ENCODE measurements at regions of chr5 and their contacts with region 1.

Region 1: GRCh38 chr5:138178516-138179276 is at the starts of genes BRD8 and KIF20A:
- DNase-seq: peak; percentile 92
- ATAC-seq: peak; percentile 92
- H3K4me3 ChIP-seq: peak within 1 kb of the TSS; percentile 97
- H3K27ac ChIP-seq: peak within 1 kb of the TSS; percentile 97
- H3K4me1 ChIP-seq: no peaks in the 10 kb centered on the region; the same call in 1 of the 2 replicates
- H3K27me3 ChIP-seq: no peaks in the 10 kb centered on the region
- CTCF ChIP-seq: no peak
- EP300 ChIP-seq: peak in 1 of 2 experiments; percentile 13; a peak in 2 of 4 replicates
- POLR2A ChIP-seq: peak; percentile 73
- RAD21 ChIP-seq: no peak
- polyA plus RNA-seq, gene BRD8: 35.2 to 52.6 TPM
- polyA plus RNA-seq, gene KIF20A: 20.7 to 27.2 TPM

Region 2: GRCh38 chr5:137858223-137858916 is 320.3 kb before region 1 on chr5:
- CTCF ChIA-PET with region 1: no interaction called
- POLR2A ChIA-PET with region 1: no interaction called
- RAD21 ChIA-PET with region 1: no interaction called
- SMC1A ChIA-PET with region 1: no interaction called
- in situ Hi-C with region 1: no loop called
- intact Hi-C with region 1: no loop called
- DNase-seq: peak; percentile 58
- ATAC-seq: peak; percentile 91
- H3K4me3 ChIP-seq: no peak overlapping the region
- H3K27ac ChIP-seq: peak overlapping the region; percentile 11
- H3K4me1 ChIP-seq: peaks cover 29% of the 10 kb centered on the region
- H3K27me3 ChIP-seq: no peaks in the 10 kb centered on the region
- CTCF ChIP-seq: no peak
- EP300 ChIP-seq: no peak
- POLR2A ChIP-seq: no peak
- RAD21 ChIP-seq: no peak

Region 3: DNA sequence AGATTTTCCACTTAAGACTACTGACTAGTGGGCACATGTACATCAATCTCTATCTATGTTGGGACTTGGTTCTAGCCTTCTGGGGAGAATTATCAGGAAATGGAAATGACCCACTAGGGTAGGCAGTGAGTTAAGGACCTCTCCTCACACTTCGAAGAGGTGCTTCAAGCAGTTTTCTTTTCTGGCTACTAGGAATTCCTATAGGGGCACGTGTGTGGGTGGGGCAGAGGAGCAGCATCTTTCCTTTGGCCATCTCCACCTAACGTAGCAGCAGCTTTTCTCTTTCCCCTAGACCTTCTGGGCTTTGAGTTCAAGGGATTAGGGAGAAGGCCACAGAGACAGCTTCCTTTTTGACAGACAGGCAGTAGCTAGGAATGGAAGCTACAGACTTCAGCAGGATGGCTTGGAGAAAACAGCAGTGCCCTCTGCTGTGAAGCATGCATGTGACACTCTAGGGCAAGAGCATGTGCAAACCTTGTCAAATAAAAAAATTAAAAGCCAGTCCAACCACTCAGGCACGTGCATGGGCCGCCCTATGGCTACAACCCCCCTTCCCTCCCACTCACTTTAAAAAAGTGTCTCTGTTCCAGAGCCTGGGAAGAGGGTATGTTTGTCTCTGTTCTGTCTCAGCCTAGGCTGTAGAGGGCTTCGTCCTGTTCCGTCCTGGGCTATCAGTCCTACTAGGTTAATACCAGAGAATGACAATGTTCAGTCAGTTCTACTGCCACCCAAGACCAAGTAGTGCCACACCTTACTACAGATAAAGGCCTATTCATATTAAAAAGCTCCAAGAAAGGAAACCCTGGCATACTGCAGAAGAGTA is 104.4 kb after region 1 on chr5:
- CTCF ChIA-PET with region 1: interaction called, 9 read pairs
- POLR2A ChIA-PET with region 1: no interaction called
- RAD21 ChIA-PET with region 1: interaction called, 5 read pairs
- SMC1A ChIA-PET with region 1: interaction called, 3 read pairs
- in situ Hi-C with region 1: no loop called
- intact Hi-C with region 1: loop called (anchors 1 kb)
- DNase-seq: no peak
- ATAC-seq: peak; percentile 78
- H3K4me3 ChIP-seq: no peak overlapping the region
- H3K27ac ChIP-seq: no peak overlapping the region
- H3K4me1 ChIP-seq: no peaks in the 10 kb centered on the region
- H3K27me3 ChIP-seq: no peaks in the 10 kb centered on the region
- CTCF ChIP-seq: peak; percentile 44 to 50 (median 44); a peak in 5 of 6 replicates
- EP300 ChIP-seq: no peak
- POLR2A ChIP-seq: no peak
- RAD21 ChIP-seq: peak; percentile 63

Region 4: GRCh38 chr5:138352071-138352721 is 173.5 kb after region 1 on chr5 and contains the start of gene KDM3B:
- CTCF ChIA-PET with region 1: interaction called, 46 read pairs
- POLR2A ChIA-PET with region 1: interaction called, 5 read pairs
- RAD21 ChIA-PET with region 1: interaction called, 16 read pairs
- SMC1A ChIA-PET with region 1: interaction called, 17 read pairs
- in situ Hi-C with region 1: no loop called
- intact Hi-C with region 1: loop called (anchors 2 kb)
- DNase-seq: peak; percentile 55
- ATAC-seq: peak; percentile 77
- H3K4me3 ChIP-seq: peak within 1 kb of the TSS; percentile 99
- H3K27ac ChIP-seq: peak within 1 kb of the TSS; percentile 93
- H3K4me1 ChIP-seq: peaks cover 3% of the 10 kb centered on the region
- H3K27me3 ChIP-seq: no peaks in the 10 kb centered on the region
- CTCF ChIP-seq: peak; percentile 99 to 100 (median 99)
- EP300 ChIP-seq: no peak
- POLR2A ChIP-seq: no peak
- RAD21 ChIP-seq: peak; percentile 53
- polyA plus RNA-seq, gene KDM3B: 8.5 to 9.6 TPM

Region 5: DNA sequence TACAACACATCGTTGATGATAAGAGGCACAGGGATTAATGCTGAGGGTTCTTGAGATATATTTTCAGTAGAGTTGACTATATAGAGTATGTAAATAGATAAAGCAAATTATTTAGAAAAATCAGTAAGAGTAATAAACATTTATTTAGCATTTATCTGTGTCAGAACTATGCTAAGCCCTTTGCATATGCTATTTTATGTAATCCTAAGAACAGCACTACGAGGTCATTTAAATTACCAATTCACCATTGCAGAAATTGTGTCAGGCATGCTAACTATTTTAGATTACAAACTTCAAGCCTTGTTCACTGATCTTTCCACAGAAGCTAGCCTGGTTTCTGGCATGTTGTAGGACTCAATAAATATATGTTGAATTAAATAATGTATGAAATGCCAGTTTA is 239.7 kb after region 1 on chr5:
- CTCF ChIA-PET with region 1: interaction called, 4 read pairs
- POLR2A ChIA-PET with region 1: no interaction called
- RAD21 ChIA-PET with region 1: no interaction called
- SMC1A ChIA-PET with region 1: no interaction called
- in situ Hi-C with region 1: loop called (anchors 10 kb)
- intact Hi-C with region 1: no loop called
- DNase-seq: no peak
- ATAC-seq: no peak
- H3K4me3 ChIP-seq: no peak overlapping the region
- H3K27ac ChIP-seq: no peak overlapping the region
- H3K4me1 ChIP-seq: no peaks in the 10 kb centered on the region
- H3K27me3 ChIP-seq: no peaks in the 10 kb centered on the region
- CTCF ChIP-seq: no peak
- EP300 ChIP-seq: no peak
- POLR2A ChIP-seq: no peak
- RAD21 ChIP-seq: no peak

Region 6: DNA sequence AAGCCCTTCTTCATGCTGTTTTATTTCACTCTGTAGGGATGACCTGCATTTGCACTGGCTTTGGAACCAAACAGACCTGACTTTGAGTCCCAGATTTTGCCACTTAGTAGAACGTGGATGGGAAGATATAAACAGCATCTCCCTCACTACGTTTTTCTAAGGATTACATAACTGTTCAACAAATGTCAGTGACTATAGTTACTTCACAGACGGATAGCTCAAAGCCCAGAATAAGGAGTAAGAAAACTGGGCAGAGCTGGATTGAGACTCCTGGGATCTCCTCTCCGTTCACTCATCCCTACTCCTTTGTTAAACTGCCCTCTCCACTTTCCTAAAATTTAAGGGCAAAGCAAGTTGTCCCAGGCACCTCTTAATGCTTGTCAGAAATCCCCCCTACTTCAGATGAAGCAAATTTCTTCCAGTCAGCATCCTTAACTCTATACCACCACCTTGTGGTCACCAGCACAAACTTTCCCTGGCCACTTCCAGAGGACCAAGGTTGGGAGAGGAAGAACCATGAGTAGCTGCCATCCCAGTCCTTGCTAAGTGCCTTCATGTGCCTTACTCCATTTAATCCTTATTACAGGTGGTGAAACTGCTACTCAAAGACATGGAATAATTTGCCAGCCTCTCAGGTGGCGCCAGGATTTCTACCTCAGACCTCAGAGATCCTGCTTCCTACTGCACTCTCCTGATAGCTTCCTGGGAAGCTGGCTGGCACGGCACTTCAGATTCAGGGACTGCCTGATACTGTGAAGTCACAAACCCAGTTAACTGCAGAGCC is 325.0 kb after region 1 on chr5:
- CTCF ChIA-PET with region 1: interaction called, 20 read pairs
- POLR2A ChIA-PET with region 1: no interaction called
- RAD21 ChIA-PET with region 1: interaction called, 4 read pairs
- SMC1A ChIA-PET with region 1: interaction called, 20 read pairs
- in situ Hi-C with region 1: loop called (anchors 25 kb)
- intact Hi-C with region 1: loop called (anchors 1 kb)
- DNase-seq: peak; percentile 17
- ATAC-seq: peak; percentile 82
- H3K4me3 ChIP-seq: no peak overlapping the region
- H3K27ac ChIP-seq: no peak overlapping the region
- H3K4me1 ChIP-seq: no peaks in the 10 kb centered on the region
- H3K27me3 ChIP-seq: no peaks in the 10 kb centered on the region
- CTCF ChIP-seq: peak; percentile 79 to 84 (median 82)
- EP300 ChIP-seq: no peak
- POLR2A ChIP-seq: peak; percentile 38; the same call in 1 of the 2 replicates
- RAD21 ChIP-seq: peak; percentile 82

Region 7: DNA sequence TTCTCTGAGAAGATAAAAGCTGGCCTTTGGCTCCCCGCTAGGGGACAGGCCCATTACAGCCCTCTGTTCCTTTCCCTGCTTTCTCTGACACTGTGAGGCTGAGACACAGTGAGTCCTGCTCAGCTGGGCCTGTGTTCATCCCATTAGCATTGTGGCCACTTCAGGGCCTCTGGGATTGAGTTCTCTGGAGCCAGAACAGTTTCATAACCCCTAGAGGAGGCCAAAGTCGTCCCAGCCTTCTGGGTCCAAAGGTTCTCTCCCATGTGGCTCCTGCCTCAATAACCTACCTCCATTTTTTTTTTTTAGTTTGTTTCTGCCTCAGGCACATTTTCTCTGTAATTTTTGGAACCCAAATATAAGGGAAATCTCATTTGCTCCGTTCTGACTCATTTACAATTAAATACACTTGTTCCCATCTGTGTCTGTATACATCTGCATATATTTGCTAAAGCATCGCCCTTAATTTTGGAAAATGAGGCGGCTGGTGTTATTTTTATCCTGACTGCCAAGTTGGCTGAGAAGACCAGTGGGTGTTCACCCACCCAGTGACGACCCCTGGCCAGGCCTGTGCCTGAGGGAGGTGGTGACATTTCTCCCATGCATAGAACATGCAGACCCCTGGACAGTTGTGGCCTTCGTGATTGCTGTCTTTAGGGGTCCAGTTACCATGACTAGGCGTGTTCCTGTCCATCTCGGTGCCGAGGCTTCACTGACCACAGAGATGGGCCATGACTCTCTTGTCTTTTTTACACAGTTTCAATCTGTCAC is 547.3 kb after region 1 on chr5:
- CTCF ChIA-PET with region 1: no interaction called
- POLR2A ChIA-PET with region 1: no interaction called
- RAD21 ChIA-PET with region 1: no interaction called
- SMC1A ChIA-PET with region 1: no interaction called
- in situ Hi-C with region 1: no loop called
- intact Hi-C with region 1: no loop called
- DNase-seq: no peak
- ATAC-seq: peak; percentile 12; the same call in 1 of the 3 replicates
- H3K4me3 ChIP-seq: no peak overlapping the region
- H3K27ac ChIP-seq: no peak overlapping the region
- H3K4me1 ChIP-seq: peaks cover 8% of the 10 kb centered on the region
- H3K27me3 ChIP-seq: no peaks in the 10 kb centered on the region
- CTCF ChIP-seq: no peak
- EP300 ChIP-seq: no peak
- POLR2A ChIP-seq: no peak
- RAD21 ChIP-seq: no peak

Measured in GM12878 (cell line).